Heart right ventricle (tissue), 16 donors: ENCODE measurements at regions of chr15 and their contacts with region 1.

Region 1: GRCh38 chr15:28901987-28902745 is 16.4 kb downstream of the APBA2 start:
- DNase-seq: no peak
- ATAC-seq: no peak
- H3K4me3 ChIP-seq: no peak overlapping the region
- H3K27ac ChIP-seq: no peak overlapping the region
- H3K4me1 ChIP-seq: no peaks in the 10 kb centered on the region
- H3K27me3 ChIP-seq: peaks cover 0 to 17% (median 0%) of the 10 kb centered on the region in 7 donors
- CTCF ChIP-seq: no peak

Region 2: GRCh38 chr15:27648359-27648758 is 1253.8 kb before region 1 on chr15:
- intact Hi-C with region 1: no loop called
- DNase-seq: no peak
- ATAC-seq: no peak
- H3K4me3 ChIP-seq: no peak overlapping the region
- H3K27ac ChIP-seq: no peak overlapping the region
- H3K4me1 ChIP-seq: no peaks in the 10 kb centered on the region
- H3K27me3 ChIP-seq: peaks cover 0 to 4% (median 0%) of the 10 kb centered on the region in 7 donors
- CTCF ChIP-seq: no peak

Region 3: DNA sequence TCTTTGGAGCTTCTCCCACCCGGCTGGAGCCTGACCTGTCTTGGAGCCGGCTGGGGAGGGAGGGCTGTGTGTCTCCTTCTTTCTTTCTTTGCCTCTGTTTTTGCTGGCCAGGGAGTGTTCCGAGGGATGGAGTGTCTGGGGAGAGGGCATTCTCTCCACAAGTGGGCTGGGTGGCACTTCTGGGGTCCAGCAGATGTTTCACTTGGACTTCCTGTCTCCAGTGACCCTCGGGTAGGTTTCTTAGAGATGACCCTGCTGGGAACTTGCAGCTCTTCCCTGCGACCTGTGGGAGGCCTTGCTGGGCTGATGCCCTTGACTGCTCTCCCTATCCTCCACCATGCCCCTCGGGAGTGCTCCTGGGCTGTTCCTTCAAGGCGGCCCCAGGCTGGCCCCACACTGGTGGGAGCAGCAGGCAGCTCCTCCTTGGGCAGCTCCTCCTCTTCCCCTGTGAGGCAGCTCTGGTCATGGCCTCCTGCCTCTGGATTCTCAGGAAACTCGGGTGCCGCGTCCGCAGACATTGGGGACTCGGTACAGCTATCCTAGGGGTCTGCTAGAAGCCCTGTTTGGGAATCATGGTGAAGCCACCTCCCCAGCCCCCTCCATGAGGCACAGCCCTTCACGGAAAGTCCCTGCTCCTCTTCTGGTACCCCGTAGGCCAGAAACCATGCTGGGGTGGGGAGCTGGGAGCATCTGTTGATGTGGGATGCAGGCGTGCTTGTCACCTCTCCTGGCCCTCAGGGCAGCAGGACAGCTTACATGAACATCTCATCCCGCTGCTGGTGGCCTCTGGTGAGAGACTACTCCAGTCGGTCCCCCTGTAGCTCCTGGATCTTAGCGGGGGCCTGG is 28.6 kb after region 1 on chr15:
- intact Hi-C with region 1: no loop called
- DNase-seq: no peak
- ATAC-seq: no peak
- H3K4me3 ChIP-seq: no peak overlapping the region
- H3K27ac ChIP-seq: no peak overlapping the region
- H3K4me1 ChIP-seq: peaks cover 0 to 2% (median 0%) of the 10 kb centered on the region in 9 donors
- H3K27me3 ChIP-seq: peaks cover 0 to 17% (median 10%) of the 10 kb centered on the region in 7 donors
- CTCF ChIP-seq: no peak

Region 4: DNA sequence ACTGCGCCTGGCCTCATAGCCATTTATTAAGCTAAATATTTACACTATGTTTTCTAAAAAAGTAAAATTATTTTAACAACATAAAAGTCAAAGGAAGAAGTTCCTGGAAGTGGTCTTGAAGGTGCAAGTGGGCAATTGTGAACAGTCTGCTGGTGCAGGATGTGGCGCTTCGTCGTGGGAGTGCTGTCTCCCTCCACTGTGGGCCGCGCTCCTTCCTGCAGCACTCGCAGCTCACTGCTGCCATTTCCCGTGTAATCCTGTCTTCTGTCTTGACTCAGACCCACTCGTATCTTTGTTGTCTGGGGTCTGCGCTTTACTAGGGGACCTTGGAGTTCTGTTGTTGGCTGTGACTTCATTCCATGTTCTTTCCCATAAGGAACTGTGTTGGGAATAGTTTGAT is 39.9 kb after region 1 on chr15:
- intact Hi-C with region 1: loop called in 1 of 10 experiments (anchors 5 kb)
- DNase-seq: no peak
- ATAC-seq: peak in 1 of 8 donors; percentile 16
- H3K4me3 ChIP-seq: no peak overlapping the region
- H3K27ac ChIP-seq: no peak overlapping the region
- H3K4me1 ChIP-seq: no peaks in the 10 kb centered on the region
- H3K27me3 ChIP-seq: peaks cover 0 to 4% (median 0%) of the 10 kb centered on the region in 7 donors
- CTCF ChIP-seq: no peak

Region 5: DNA sequence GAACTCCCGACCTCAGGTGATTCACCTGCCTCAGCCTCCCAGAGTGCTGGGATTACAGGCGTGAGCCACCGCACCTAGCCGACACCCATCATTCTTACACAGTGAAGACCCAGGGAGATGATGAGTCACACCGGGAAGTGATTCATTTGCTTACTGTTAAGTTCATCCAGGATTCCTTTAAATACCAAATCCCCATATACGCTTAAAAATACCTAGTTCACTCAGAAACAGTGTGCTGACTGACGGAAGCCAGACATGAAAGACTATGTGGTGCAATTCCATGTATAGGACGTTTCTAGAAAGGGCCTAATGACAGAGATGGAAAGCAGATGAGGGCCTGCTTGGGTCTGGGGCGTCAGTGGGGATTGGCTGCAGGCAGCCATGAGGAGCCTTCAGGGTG is 58.8 kb after region 1 on chr15:
- intact Hi-C with region 1: loop called in 1 of 10 experiments (anchors 10 kb)
- DNase-seq: no peak
- ATAC-seq: no peak
- H3K4me3 ChIP-seq: no peak overlapping the region
- H3K27ac ChIP-seq: no peak overlapping the region
- H3K4me1 ChIP-seq: no peaks in the 10 kb centered on the region
- H3K27me3 ChIP-seq: peaks cover 0 to 4% (median 0%) of the 10 kb centered on the region in 7 donors
- CTCF ChIP-seq: no peak